ENCODE measurements at regions of chrX and their contacts with region 1.

Region 1: GRCh38 chrX:44216171-44216570 is 127.3 kb downstream of the EFHC2 start:
- DNase-seq: no peak
- H3K4me3 ChIP-seq: no peak overlapping the region
- H3K27ac ChIP-seq: no peak overlapping the region
- H3K4me1 ChIP-seq: no peaks in the 10 kb centered on the region
- H3K27me3 ChIP-seq: peaks cover 24% of the 10 kb centered on the region
- CTCF ChIP-seq: no peak

Region 2: DNA sequence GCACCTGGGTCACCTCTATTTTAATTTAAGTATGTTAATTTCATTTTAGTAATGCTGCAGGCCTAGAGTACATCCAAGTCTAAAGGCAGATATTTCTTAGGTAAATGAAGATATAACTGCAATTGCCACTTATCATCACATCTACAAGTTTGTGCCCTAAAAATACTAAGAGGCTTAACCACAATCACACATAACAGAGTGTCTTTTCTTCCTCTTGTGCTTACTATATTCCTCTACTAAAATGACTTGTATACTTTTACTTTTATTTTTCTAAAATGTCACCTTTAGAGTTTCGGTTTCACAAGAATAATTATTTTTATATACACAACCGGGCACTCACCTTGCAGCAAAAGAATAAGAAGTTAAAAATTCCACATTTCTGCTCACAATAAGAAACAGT is 49.4 kb after region 1 on chrX:
- CTCF ChIA-PET with region 1: no interaction called
- POLR2A ChIA-PET with region 1: no interaction called
- intact Hi-C with region 1: loop called (anchors 10 kb)
- DNase-seq: no peak
- H3K4me3 ChIP-seq: no peak overlapping the region
- H3K27ac ChIP-seq: no peak overlapping the region
- H3K4me1 ChIP-seq: no peaks in the 10 kb centered on the region
- H3K27me3 ChIP-seq: no peaks in the 10 kb centered on the region
- CTCF ChIP-seq: no peak

Region 3: DNA sequence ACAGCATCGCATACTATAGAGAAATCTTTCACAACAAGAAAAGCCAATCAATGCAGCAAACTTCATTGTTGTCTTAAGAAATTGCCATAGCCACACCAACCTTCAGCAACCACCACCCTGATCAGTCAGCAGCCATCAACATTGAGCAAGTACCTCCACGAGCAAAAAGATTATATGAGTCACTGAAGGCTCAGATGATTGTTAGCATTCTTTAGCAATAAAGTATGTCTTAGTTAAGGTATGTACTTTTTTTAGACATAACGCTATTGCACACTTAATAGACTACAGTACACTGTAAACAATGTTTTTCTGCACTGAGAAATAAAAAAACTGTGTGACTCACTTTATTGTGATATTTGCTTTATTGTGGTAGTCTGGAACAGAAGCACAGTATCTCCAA is 364.3 kb after region 1 on chrX:
- CTCF ChIA-PET with region 1: no interaction called
- POLR2A ChIA-PET with region 1: no interaction called
- intact Hi-C with region 1: no loop called
- DNase-seq: no peak
- H3K4me3 ChIP-seq: no peak overlapping the region
- H3K27ac ChIP-seq: no peak overlapping the region
- H3K4me1 ChIP-seq: no peaks in the 10 kb centered on the region
- H3K27me3 ChIP-seq: no peaks in the 10 kb centered on the region
- CTCF ChIP-seq: no peak